ENCODE measurements at regions of chr6 and their contacts with region 1.

Region 1: DNA sequence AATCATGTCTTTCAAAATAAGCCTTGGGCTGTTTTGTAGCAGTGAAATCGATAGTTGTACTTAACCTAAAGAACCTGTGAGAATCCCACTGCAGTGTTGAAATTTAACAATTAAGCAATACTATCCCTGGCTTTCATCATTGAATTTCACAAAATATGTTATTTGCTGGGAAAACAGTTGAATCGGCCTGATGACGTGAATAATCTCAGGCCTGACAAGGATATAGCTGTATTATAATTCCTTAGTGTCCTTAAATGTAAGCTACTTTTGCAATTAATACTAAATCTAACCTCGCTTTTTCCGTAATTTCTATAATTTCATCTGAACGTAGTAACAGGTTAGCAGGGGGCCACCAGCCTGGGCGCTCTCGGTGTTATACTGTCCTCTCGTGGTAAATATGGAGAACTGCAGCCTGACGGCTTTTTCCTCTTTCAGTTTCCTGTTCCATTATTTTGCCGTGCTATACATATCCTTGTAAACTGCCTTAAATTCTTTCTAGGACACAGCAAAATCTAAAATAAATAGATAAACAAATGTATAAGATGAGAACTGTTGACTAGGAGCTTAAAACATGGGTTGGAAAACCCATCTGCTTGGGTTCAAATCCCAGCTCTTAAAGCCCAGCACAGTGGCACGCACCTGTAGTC is 24.0 kb downstream of the MTFR2 start:
- DNase-seq: peak in 4 of 5 donors; percentile 39 to 63 (median 50)
- ATAC-seq: peak; percentile 73 to 91 (median 79)
- H3K4me3 ChIP-seq: peak overlapping the region in 9 of 12 donors; percentile 16 to 49 (median 27)
- H3K27ac ChIP-seq: peak overlapping the region in 6 of 12 donors; percentile 3 to 39 (median 17)
- H3K4me1 ChIP-seq: peaks cover 0 to 34% (median 2%) of the 10 kb centered on the region in 12 donors
- H3K27me3 ChIP-seq: no peaks in the 10 kb centered on the region
- CTCF ChIP-seq: peak; percentile 99 to 100 (median 100)
- POLR2A ChIP-seq: no peak

Region 2: GRCh38 chr6:135506270-135506997 is 719.7 kb before region 1 on chr6:
- intact Hi-C with region 1: loop called in 3 of 10 experiments (anchors 1 to 5 kb)
- DNase-seq: no peak
- ATAC-seq: peak in 1 of 4 donors; percentile 46
- H3K4me3 ChIP-seq: no peak overlapping the region
- H3K27ac ChIP-seq: no peak overlapping the region
- H3K4me1 ChIP-seq: no peaks in the 10 kb centered on the region
- H3K27me3 ChIP-seq: no peaks in the 10 kb centered on the region
- CTCF ChIP-seq: peak; percentile 44 to 74 (median 59)
- POLR2A ChIP-seq: no peak

Region 3: GRCh38 chr6:135675862-135676261 is 550.3 kb before region 1 on chr6:
- intact Hi-C with region 1: loop called in 3 of 10 experiments (anchors 5 to 10 kb)
- DNase-seq: no peak
- ATAC-seq: no peak
- H3K4me3 ChIP-seq: no peak overlapping the region
- H3K27ac ChIP-seq: no peak overlapping the region
- H3K4me1 ChIP-seq: no peaks in the 10 kb centered on the region
- H3K27me3 ChIP-seq: no peaks in the 10 kb centered on the region
- CTCF ChIP-seq: peak in 4 of 12 donors; percentile 14 to 25 (median 16)
- POLR2A ChIP-seq: no peak

Region 4: GRCh38 chr6:135811644-135812526 is 414.3 kb before region 1 on chr6:
- intact Hi-C with region 1: no loop called
- DNase-seq: peak in 3 of 5 donors; percentile 9 to 41 (median 31)
- ATAC-seq: peak in 3 of 4 donors; percentile 45 to 53 (median 51)
- H3K4me3 ChIP-seq: no peak overlapping the region
- H3K27ac ChIP-seq: peak overlapping the region; percentile 10 to 64 (median 38)
- H3K4me1 ChIP-seq: peaks cover 0 to 24% (median 16%) of the 10 kb centered on the region in 12 donors
- H3K27me3 ChIP-seq: peaks cover 0 to 2% (median 0%) of the 10 kb centered on the region in 9 donors
- CTCF ChIP-seq: no peak
- POLR2A ChIP-seq: no peak

Region 5: DNA sequence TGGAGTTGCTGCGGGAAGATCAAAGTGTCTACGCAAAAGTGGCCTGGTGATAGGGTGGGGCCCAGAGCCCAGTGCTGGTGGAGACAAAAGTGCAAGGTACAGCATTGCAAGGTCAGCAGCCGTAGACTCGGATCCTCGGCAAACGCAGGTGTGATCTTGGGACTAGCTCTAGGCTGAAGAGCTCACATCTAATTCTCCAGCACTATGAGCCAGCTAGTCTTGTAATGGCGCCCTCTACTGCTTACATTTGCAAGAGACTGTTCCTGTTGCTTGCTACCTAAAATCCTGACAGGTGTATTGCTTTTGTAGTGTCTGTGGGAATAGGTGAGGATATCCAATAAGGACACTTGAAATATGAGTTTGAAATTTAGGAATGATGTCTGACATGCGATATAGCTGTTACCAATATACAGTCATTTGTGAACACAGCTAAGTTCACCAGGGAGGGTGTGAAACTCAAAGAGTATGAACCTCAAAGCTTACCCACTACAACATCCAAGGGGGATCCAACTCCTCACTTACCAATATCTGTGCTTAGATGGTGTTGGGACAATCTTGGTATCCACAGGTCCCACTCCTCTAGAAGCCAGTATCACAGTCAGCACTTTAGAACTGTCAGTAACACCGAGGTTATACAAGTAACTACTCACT is 316.3 kb before region 1 on chr6:
- intact Hi-C with region 1: loop called in 1 of 10 experiments (anchors 10 kb)
- DNase-seq: peak in 1 of 5 donors; percentile 27
- ATAC-seq: peak in 1 of 4 donors; percentile 42
- H3K4me3 ChIP-seq: no peak overlapping the region
- H3K27ac ChIP-seq: no peak overlapping the region
- H3K4me1 ChIP-seq: no peaks in the 10 kb centered on the region
- H3K27me3 ChIP-seq: no peaks in the 10 kb centered on the region
- CTCF ChIP-seq: peak in 11 of 12 donors; percentile 27 to 60 (median 49)
- POLR2A ChIP-seq: no peak

Region 6: DNA sequence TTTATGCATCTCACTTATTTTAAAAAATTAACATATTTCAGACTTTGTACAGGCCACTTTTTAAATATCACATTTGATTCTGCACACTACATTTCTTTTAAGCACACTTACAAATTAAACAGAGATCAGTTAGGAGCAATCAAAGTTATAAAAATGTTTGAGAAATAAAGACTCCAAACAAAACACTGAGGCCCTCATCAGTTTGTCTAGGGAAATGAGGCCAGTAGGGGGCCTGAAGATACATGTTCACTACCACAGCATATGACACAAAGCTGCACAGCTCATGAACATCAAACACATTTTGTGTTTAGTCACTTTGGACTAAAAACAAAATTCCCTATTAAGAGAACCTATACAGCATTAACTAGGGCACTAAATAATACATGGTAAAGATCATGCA is 194.2 kb before region 1 on chr6:
- intact Hi-C with region 1: loop called (anchors 1 to 10 kb)
- DNase-seq: peak in 1 of 5 donors; percentile 45
- ATAC-seq: peak in 2 of 4 donors; percentile 55
- H3K4me3 ChIP-seq: no peak overlapping the region
- H3K27ac ChIP-seq: peak overlapping the region in 1 of 12 donors; percentile 6
- H3K4me1 ChIP-seq: peaks cover 0 to 36% (median 22%) of the 10 kb centered on the region in 12 donors
- H3K27me3 ChIP-seq: no peaks in the 10 kb centered on the region
- CTCF ChIP-seq: peak; percentile 35 to 70 (median 58)
- POLR2A ChIP-seq: no peak

Region 7: DNA sequence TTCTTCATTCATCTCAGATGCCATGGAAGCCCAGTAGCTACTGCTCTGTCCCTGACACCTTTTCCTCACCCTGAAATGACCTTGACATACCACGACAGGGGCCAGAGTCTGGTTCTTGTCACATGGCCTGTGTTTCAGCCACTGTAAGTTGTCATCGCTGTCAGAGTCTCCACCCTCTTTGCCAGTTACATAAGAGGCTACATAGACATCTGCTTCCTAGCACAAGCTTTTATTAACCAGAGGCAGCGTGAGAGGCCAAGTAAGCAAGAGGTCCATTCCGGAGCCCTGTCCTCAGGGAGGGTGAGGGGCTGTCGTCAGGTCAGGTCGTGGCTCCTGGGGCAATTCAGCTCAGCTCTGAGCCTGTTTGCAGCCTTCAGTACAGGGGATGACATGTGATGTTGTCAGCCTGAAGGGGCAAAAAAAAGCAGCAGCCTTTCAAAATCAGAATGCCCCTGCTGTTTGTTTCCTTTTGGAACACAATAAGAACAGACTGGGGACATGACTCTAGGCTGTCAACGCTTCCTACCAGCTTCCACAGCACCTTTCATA is 122.3 kb before region 1 on chr6:
- intact Hi-C with region 1: no loop called
- DNase-seq: peak; percentile 83 to 92 (median 85)
- ATAC-seq: peak; percentile 96 to 99 (median 98)
- H3K4me3 ChIP-seq: peak overlapping the region in 1 of 12 donors; percentile 16
- H3K27ac ChIP-seq: peak overlapping the region; percentile 67 to 90 (median 84)
- H3K4me1 ChIP-seq: peaks cover 0 to 77% (median 40%) of the 10 kb centered on the region in 12 donors
- H3K27me3 ChIP-seq: no peaks in the 10 kb centered on the region
- CTCF ChIP-seq: no peak
- POLR2A ChIP-seq: peak in 1 of 2 donors; percentile 40

Region 8: GRCh38 chr6:136262940-136263339 is 36.8 kb after region 1 on chr6:
- intact Hi-C with region 1: no loop called
- DNase-seq: no peak
- ATAC-seq: no peak
- H3K4me3 ChIP-seq: no peak overlapping the region
- H3K27ac ChIP-seq: no peak overlapping the region
- H3K4me1 ChIP-seq: peaks cover 0 to 17% (median 0%) of the 10 kb centered on the region in 12 donors
- H3K27me3 ChIP-seq: no peaks in the 10 kb centered on the region
- CTCF ChIP-seq: no peak
- POLR2A ChIP-seq: no peak

Region 9: DNA sequence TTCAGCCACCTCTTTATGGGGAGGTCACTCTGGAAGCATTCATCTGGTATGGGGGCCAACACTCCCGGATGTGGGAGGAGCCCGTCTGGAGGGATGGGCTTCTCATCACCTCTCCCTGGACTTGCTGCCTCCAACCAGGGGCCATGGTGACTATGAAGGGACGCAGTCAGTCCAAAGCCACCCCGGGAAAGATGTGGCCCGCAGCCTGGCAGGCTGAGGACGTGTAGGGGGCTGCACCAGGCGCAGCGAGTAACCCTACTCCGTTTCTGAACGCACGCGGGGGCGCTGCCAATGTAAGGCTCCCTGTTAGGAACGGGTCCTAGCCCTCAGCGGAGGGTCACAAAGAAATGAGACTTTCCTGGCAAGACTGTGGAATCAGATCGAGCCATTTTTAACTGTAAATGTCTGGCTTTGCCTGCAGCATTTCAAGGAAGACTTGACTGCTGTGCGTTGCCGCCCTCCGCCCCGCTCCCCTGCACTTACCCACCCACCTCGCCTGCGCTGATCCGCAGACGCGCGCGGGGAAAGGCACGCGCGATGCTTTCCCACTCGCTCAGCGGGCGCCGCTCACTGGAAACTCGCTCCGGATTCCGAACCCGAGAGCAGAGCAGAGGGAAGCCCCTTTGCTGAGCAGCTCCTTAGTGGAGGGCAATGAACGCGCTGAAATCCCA is 763.6 kb after region 1 on chr6:
- intact Hi-C with region 1: no loop called
- DNase-seq: peak in 4 of 5 donors; percentile 39 to 74 (median 45)
- ATAC-seq: peak; percentile 88 to 97 (median 94)
- H3K4me3 ChIP-seq: peak overlapping the region; percentile 16 to 67 (median 56)
- H3K27ac ChIP-seq: peak overlapping the region in 9 of 12 donors; percentile 7 to 69 (median 40)
- H3K4me1 ChIP-seq: peaks cover 0 to 20% (median 3%) of the 10 kb centered on the region in 12 donors
- H3K27me3 ChIP-seq: peaks cover 0 to 47% (median 0%) of the 10 kb centered on the region in 9 donors
- CTCF ChIP-seq: no peak
- POLR2A ChIP-seq: no peak